ENCODE measurements at regions of chr5 and their contacts with region 1.

Region 1: DNA sequence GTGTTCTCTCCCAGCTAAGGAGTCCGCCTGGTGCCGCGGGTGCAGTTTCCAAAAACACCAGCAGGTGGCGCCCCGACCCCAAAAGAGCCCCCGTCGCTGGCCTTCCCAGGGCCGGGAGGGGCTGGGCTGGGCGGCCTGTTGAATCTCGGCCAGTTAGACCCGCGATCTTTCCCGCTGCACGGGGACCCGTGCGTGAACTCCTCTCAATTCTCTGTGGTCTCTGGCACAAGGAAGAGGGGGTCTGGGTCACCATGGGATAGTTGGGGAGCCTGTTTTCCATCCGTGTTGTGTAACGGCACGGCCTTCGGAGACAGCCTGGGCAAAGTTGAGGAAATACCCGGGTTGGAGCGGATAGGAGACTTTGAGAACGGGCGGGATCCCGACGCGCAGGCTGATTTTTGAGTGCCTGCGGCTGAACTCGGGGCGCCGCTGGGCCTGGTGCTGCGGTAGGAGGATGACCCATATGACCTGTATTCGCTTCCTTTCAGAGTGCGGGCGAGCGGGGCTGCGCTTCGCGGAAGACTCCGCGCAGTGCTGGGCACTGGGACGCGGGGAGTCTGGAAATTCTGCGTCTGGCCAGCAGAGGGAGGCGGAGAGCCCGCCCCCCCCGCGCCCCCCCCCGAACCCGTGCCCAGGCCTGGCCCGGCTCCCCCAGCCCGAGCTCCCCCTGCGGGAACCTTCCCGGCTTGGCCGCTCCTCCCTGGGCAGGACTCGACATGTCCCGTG is 7.9 kb upstream of the PSD2 start:
- DNase-seq: peak; percentile 86 to 96 (median 96)
- ATAC-seq: peak; percentile 96
- H3K4me3 ChIP-seq: peak overlapping the region; percentile 35
- H3K27ac ChIP-seq: no peak overlapping the region
- H3K4me1 ChIP-seq: peaks cover 0 to 21% of the 10 kb centered on the region in 2 experiments; a peak in 2 of 5 replicates
- H3K27me3 ChIP-seq: peaks cover 16 to 40% of the 10 kb centered on the region in 2 experiments
- CTCF ChIP-seq: peak; percentile 91 to 97 (median 96)
- EP300 ChIP-seq: no peak
- POLR2A ChIP-seq: no peak
- RAD21 ChIP-seq: peak; percentile 96 to 97

Region 2: DNA sequence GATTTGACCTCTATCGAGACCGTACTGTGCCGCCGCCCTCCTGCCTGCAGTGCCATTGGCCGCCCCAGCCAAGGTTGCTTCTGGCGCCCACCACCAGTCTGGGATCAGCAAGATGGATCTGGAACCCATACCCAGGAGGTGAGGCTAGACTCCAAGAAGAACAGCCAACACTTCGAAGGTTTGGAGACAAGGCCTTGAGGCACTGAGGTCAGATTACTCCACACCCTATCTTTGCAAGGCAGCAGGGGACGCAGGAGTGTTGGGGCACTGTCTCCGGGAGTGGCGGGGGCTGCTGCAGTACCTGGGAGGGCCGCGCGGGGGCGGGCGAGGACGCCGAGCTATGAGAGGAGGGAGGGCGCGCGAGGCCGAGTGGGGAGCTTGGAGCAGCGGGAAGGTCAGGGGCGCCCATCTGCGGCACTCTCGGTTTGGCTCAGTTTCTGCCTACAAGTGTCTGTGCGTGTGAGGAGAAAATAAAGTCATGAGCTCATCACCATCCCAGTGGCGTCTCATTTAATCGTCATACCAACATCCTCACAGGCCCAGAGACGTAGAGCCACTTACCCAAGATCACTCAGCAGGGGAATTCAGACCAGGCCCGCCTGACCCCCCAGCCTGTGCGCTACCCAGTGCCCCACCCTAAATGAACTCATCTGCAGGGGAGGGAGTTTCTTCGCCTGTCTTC is 12.6 kb before region 1 on chr5:
- CTCF ChIA-PET with region 1: interaction called, 3 read pairs
- POLR2A ChIA-PET with region 1: interaction called, 3 read pairs
- in situ Hi-C with region 1: no loop called
- intact Hi-C with region 1: loop called (anchors 1 kb)
- DNase-seq: peak; percentile 88 to 94 (median 92)
- ATAC-seq: peak; percentile 98
- H3K4me3 ChIP-seq: no peak overlapping the region
- H3K27ac ChIP-seq: no peak overlapping the region
- H3K4me1 ChIP-seq: peaks cover 4 to 14% of the 10 kb centered on the region in 2 experiments; a peak in 4 of 5 replicates
- H3K27me3 ChIP-seq: peaks cover 2 to 17% of the 10 kb centered on the region in 2 experiments; a peak in 3 of 5 replicates
- CTCF ChIP-seq: peak; percentile 96 to 99 (median 98)
- EP300 ChIP-seq: 0 out of 2 replicates have a peak, but pooled peaks have one; percentile 22
- POLR2A ChIP-seq: no peak
- RAD21 ChIP-seq: peak; percentile 53 to 76

Region 3: GRCh38 chr5:139863855-139864558 is 76.3 kb after region 1 on chr5:
- CTCF ChIA-PET with region 1: interaction called, 23 read pairs
- POLR2A ChIA-PET with region 1: no interaction called
- in situ Hi-C with region 1: no loop called
- intact Hi-C with region 1: loop called (anchors 1 kb)
- DNase-seq: peak; percentile 69 to 77 (median 74)
- ATAC-seq: peak; percentile 91
- H3K4me3 ChIP-seq: no peak overlapping the region
- H3K27ac ChIP-seq: no peak overlapping the region
- H3K4me1 ChIP-seq: no peaks in the 10 kb centered on the region
- H3K27me3 ChIP-seq: peaks cover 0 to 29% of the 10 kb centered on the region in 2 experiments; a peak in 3 of 5 replicates
- CTCF ChIP-seq: peak; percentile 85 to 88 (median 86)
- EP300 ChIP-seq: no peak
- POLR2A ChIP-seq: no peak
- RAD21 ChIP-seq: peak; percentile 50 to 79

Region 4: GRCh38 chr5:139974661-139975060 is 186.9 kb after region 1 on chr5:
- CTCF ChIA-PET with region 1: interaction called, 117 read pairs
- POLR2A ChIA-PET with region 1: interaction called, 3 read pairs
- in situ Hi-C with region 1: loop called (anchors 5 kb)
- intact Hi-C with region 1: no loop called
- DNase-seq: no peak
- ATAC-seq: peak; percentile 51; the same call in 2 of the 3 replicates
- H3K4me3 ChIP-seq: no peak overlapping the region
- H3K27ac ChIP-seq: no peak overlapping the region
- H3K4me1 ChIP-seq: no peaks in the 10 kb centered on the region
- H3K27me3 ChIP-seq: peaks cover 4 to 10% of the 10 kb centered on the region in 2 experiments; a peak in 3 of 5 replicates
- CTCF ChIP-seq: no peak
- EP300 ChIP-seq: no peak
- POLR2A ChIP-seq: no peak
- RAD21 ChIP-seq: no peak

Region 5: DNA sequence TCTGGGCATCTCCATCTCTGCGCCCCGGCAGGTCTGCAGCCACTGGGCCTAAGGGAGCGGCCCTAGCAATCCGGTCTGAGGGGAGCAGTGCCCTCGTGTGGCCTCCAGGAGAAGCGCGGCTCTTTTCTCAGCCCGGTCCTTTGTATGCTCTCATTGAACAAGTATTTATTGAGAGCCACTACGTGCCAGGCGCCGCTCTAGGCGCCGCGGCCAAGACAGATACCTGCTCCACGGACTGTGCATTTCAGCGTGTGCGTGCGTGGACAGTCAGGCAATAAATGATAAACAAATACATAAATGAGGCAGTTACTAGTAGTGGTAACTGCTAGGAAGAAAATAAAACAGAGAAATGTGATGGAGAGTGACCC is 570.0 kb after region 1 on chr5:
- CTCF ChIA-PET with region 1: no interaction called
- POLR2A ChIA-PET with region 1: no interaction called
- in situ Hi-C with region 1: no loop called
- intact Hi-C with region 1: loop called (anchors 10 kb)
- DNase-seq: peak; percentile 81 to 85 (median 82)
- ATAC-seq: peak; percentile 97
- H3K4me3 ChIP-seq: peak overlapping the region; percentile 20
- H3K27ac ChIP-seq: no peak overlapping the region
- H3K4me1 ChIP-seq: peaks cover 0 to 12% of the 10 kb centered on the region in 2 experiments; a peak in 2 of 5 replicates
- H3K27me3 ChIP-seq: no peaks in the 10 kb centered on the region
- CTCF ChIP-seq: peak; percentile 94
- EP300 ChIP-seq: no peak
- POLR2A ChIP-seq: no peak
- RAD21 ChIP-seq: peak; percentile 79 to 88